ENCODE measurements at regions of chr20 and their contacts with region 1.

Region 1: DNA sequence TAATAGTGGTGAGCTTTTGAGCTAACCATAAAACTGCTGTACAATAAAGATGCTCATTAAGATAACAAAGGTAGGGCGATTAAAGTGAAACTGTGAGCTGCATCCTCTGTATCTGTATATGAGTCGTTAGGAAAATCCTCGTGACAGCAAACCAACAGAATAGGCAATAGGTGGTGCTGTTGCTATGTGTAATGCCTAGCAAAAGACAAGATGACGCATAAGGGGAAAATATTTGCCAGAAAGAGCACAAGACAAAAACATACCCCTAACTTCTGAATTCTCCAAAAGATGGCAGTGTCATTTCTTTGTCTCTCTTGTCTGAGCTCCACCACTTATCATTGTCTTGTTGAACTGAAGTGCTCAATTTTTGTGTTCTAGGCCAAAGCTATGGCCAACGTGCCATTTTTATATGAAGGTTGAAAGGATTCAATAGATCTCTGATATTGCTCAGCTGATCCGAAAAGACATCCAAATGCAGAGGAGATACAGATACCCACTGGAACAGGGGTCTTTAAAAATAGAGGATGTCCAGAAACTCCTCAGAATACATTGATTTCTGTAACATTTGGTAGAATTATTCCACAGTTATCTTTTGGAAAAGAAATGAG is 56.3 kb upstream of the ANKEF1 start:
- DNase-seq: peak; percentile 49
- H3K4me3 ChIP-seq: no peak overlapping the region
- H3K27me3 ChIP-seq: no peaks in the 10 kb centered on the region; the same call in none of the 2 replicates
- CTCF ChIP-seq: peak; percentile 71

Region 2: GRCh38 chr20:9581509-9581908 is 397.0 kb before region 1 on chr20:
- CTCF ChIA-PET with region 1: no interaction called
- POLR2A ChIA-PET with region 1: no interaction called
- DNase-seq: no peak
- H3K4me3 ChIP-seq: no peak overlapping the region
- H3K27me3 ChIP-seq: no peaks in the 10 kb centered on the region
- CTCF ChIP-seq: no peak

Region 3: DNA sequence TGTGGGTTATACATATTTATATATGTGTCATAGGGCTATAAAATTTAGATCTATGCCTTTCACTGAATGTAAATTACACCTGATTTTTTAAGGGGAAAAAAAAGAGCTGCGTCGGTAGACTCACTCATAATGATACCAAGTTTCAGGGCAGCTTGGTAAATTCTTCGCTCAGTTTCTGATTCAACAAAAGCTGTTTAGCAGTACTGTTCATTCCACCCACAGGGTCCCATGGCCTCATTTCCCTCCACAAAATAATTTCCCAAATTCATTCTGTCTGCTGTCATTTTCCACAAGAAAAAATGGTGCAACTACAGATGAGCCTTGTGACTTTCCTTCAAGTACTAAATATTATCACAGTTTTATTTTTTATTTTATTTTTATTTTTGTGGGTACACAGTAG is 203.3 kb before region 1 on chr20:
- CTCF ChIA-PET with region 1: no interaction called
- POLR2A ChIA-PET with region 1: no interaction called
- DNase-seq: no peak
- H3K4me3 ChIP-seq: no peak overlapping the region
- H3K27me3 ChIP-seq: no peaks in the 10 kb centered on the region
- CTCF ChIP-seq: no peak

Region 4: DNA sequence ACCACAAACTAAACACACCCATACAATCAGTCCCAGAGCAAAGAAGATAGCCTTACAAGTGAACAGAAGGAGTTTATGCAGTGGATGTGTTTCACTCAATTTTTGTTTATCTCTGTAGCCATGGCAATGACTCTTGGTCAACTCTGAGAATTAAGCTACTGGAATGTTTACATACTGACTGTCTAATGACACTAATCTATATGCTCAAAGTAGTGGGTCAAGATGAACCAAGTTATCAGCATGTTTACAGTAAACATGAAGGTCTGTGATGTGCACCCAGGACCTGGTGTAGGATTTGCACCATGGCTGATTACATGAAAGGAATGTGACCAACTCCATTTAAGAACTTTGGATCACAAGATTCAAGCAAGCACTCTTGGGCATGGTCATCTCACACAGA is 121.1 kb before region 1 on chr20:
- CTCF ChIA-PET with region 1: no interaction called
- POLR2A ChIA-PET with region 1: no interaction called
- DNase-seq: no peak
- H3K4me3 ChIP-seq: no peak overlapping the region
- H3K27me3 ChIP-seq: no peaks in the 10 kb centered on the region
- CTCF ChIP-seq: no peak

Region 5: DNA sequence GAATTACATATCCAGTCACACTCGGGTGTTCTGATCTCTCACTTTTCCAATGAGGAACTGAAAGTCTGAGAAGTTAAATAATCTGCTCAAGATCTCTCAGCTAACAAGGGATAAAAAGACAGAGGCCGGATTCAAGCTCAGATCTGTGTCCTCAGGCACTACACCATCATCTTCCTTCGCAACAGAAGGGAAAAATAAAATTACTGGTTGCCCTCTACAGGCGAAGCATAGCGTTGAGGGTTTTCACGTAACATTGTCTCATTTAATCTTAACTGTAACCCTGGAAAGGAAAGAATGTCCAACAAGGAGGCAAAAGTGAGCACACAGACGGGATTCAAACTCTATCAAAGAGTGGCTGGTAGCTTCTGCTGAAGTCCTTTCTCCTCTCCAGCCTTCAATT is 11.5 kb before region 1 on chr20:
- CTCF ChIA-PET with region 1: interaction called, 23 read pairs
- POLR2A ChIA-PET with region 1: no interaction called
- DNase-seq: no peak
- H3K4me3 ChIP-seq: no peak overlapping the region
- H3K27me3 ChIP-seq: peaks cover 5% of the 10 kb centered on the region; the same call in 1 of the 2 replicates
- CTCF ChIP-seq: peak; percentile 35; the same call in 1 of the 2 replicates

Region 6: GRCh38 chr20:9989066-9989724 is 10.7 kb after region 1 on chr20:
- CTCF ChIA-PET with region 1: interaction called, 11 read pairs
- POLR2A ChIA-PET with region 1: no interaction called
- DNase-seq: peak; percentile 19
- H3K4me3 ChIP-seq: no peak overlapping the region
- H3K27me3 ChIP-seq: no peaks in the 10 kb centered on the region
- CTCF ChIP-seq: no peak

Region 7: DNA sequence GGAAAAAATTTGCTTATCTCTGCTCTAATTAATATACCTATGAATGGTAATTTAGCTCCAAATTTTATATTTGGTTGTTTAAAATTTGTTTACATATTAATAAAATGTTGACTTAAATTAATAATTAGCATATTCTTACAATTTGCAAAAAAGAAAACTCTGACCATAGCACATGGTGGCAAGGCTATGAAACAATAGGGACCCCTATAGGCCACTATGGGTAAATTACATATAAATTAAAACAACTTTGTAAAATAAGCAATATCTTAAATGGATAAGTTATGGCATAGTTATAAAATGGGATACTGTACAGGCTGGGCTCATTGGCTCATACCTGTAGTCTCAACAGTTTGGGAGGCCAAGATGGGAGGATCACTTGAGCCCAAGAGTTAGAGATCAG is 379.5 kb after region 1 on chr20:
- CTCF ChIA-PET with region 1: interaction called, 10 read pairs
- POLR2A ChIA-PET with region 1: no interaction called
- DNase-seq: no peak
- H3K4me3 ChIP-seq: no peak overlapping the region
- H3K27me3 ChIP-seq: no peaks in the 10 kb centered on the region
- CTCF ChIP-seq: peak; percentile 50

Region 8: DNA sequence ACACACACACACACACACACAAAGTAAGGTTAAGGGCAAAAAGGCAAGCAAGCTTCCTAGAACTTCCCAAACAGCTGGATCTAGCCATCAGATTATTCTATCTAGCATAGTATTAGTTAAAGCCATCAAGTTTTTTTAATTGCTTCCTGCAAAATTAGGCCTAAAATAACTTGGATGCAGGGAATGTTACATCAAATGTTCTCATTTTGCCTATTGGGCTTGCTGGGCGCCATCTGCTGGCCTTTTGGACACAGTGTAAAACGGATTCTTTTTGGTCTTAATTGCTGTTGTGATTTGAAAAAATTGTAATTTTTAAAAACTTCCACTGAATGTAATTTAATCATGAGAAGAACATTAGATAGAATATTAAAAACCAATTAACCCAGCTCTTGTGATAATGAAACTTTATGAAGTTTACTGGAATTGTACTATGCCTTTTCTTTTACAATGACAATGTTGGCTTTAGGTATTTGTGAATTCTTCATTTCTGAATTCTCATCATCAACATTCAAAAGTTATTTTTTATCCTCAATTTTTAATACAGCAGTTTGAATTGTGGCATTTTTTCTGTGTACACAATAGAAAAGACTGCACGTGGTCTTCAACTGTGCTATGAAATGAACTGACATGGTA is 448.7 kb after region 1 on chr20:
- CTCF ChIA-PET with region 1: interaction called, 98 read pairs
- POLR2A ChIA-PET with region 1: no interaction called
- DNase-seq: no peak
- H3K4me3 ChIP-seq: no peak overlapping the region
- H3K27me3 ChIP-seq: no peaks in the 10 kb centered on the region
- CTCF ChIP-seq: peak; percentile 85

Region 9: GRCh38 chr20:10434467-10434831 is 455.9 kb after region 1 on chr20:
- CTCF ChIA-PET with region 1: interaction called, 15 read pairs
- POLR2A ChIA-PET with region 1: no interaction called
- DNase-seq: peak; percentile 96
- H3K4me3 ChIP-seq: peak overlapping the region; percentile 98
- H3K27me3 ChIP-seq: no peaks in the 10 kb centered on the region
- CTCF ChIP-seq: no peak

Measured in BJ (cell line).